ENCODE measurements at regions of chr4 and their contacts with region 1.

Region 1: GRCh38 chr4:88613417-88613875 is 21.2 kb downstream of the HERC3 start:
- DNase-seq: peak; percentile 34
- H3K4me3 Mint-ChIP-seq: peak overlapping the region; percentile 44
- H3K27ac Mint-ChIP-seq: peak overlapping the region; percentile 76
- H3K4me1 Mint-ChIP-seq: peaks cover 54% of the 10 kb centered on the region
- H3K27me3 Mint-ChIP-seq: no peaks in the 10 kb centered on the region

Region 2: GRCh38 chr4:88390128-88390527 is 223.3 kb before region 1 on chr4:
- CTCF ChIA-PET with region 1: no interaction called
- POLR2A ChIA-PET with region 1: no interaction called
- DNase-seq: no peak
- H3K4me3 Mint-ChIP-seq: no peak overlapping the region
- H3K27ac Mint-ChIP-seq: no peak overlapping the region
- H3K4me1 Mint-ChIP-seq: peaks cover 20% of the 10 kb centered on the region
- H3K27me3 Mint-ChIP-seq: no peaks in the 10 kb centered on the region

Region 3: DNA sequence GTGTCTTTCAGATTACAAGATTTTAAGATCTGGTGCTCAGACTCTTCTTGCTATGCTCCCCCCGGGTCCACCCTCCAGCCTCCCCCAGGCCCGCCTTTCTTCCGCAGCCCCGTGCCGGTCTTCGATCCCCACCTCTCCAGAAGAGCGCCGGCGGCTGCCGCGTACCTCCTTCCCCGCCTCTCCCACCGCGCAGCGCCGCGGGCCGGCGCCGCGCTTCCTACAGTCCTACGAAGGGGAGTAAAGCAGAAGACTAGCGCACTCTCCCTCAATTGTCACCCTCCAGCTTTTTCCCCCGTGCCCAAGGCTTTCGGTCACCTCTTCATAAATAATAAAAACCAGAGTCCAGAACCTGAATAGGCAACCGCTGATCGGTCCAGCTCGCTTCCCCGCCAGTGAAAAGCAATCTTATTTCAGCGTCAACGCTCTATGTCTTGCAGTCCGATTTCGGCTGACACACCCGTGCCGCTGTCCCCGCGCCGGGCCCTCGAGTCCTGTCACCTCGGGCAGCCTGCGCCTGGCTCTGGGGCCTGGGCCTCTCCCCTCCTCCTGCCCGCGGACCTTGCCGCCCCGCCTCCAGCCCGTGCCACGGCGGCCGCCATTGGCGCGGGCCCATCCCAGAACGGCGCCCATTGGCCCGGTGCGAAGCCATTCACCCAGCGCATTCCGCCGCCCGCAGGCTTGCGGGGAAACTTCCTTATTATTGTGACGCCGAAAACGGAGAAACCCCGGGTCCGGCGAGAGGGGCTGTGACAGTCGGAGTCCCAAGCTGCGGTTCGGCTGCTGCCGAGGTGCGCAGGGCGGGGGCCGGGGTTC is 21.5 kb before region 1 on chr4 and contains the start of gene HERC3:
- CTCF ChIA-PET with region 1: interaction called, 8 read pairs
- POLR2A ChIA-PET with region 1: interaction called, 31 read pairs
- DNase-seq: peak; percentile 89
- H3K4me3 Mint-ChIP-seq: peak within 1 kb of the TSS; percentile 94
- H3K27ac Mint-ChIP-seq: peak within 1 kb of the TSS; percentile 82
- H3K4me1 Mint-ChIP-seq: peaks cover 37% of the 10 kb centered on the region
- H3K27me3 Mint-ChIP-seq: peaks cover 9% of the 10 kb centered on the region
- total RNA-seq, gene HERC3: 36.9 to 41.9 TPM

Region 4: GRCh38 chr4:88600176-88600838 is 13.1 kb before region 1 on chr4:
- CTCF ChIA-PET with region 1: interaction called, 3 read pairs
- POLR2A ChIA-PET with region 1: interaction called, 36 read pairs
- DNase-seq: no peak
- H3K4me3 Mint-ChIP-seq: no peak overlapping the region
- H3K27ac Mint-ChIP-seq: no peak overlapping the region
- H3K4me1 Mint-ChIP-seq: peaks cover 47% of the 10 kb centered on the region
- H3K27me3 Mint-ChIP-seq: no peaks in the 10 kb centered on the region

Region 5: GRCh38 chr4:88628759-88629158 is 15.3 kb after region 1 on chr4:
- CTCF ChIA-PET with region 1: no interaction called
- POLR2A ChIA-PET with region 1: no interaction called
- DNase-seq: no peak
- H3K4me3 Mint-ChIP-seq: no peak overlapping the region
- H3K27ac Mint-ChIP-seq: no peak overlapping the region
- H3K4me1 Mint-ChIP-seq: peaks cover 2% of the 10 kb centered on the region
- H3K27me3 Mint-ChIP-seq: no peaks in the 10 kb centered on the region